WTC11 (cell line): ENCODE measurements at regions of chr12 and their contacts with region 1.

Region 1: DNA sequence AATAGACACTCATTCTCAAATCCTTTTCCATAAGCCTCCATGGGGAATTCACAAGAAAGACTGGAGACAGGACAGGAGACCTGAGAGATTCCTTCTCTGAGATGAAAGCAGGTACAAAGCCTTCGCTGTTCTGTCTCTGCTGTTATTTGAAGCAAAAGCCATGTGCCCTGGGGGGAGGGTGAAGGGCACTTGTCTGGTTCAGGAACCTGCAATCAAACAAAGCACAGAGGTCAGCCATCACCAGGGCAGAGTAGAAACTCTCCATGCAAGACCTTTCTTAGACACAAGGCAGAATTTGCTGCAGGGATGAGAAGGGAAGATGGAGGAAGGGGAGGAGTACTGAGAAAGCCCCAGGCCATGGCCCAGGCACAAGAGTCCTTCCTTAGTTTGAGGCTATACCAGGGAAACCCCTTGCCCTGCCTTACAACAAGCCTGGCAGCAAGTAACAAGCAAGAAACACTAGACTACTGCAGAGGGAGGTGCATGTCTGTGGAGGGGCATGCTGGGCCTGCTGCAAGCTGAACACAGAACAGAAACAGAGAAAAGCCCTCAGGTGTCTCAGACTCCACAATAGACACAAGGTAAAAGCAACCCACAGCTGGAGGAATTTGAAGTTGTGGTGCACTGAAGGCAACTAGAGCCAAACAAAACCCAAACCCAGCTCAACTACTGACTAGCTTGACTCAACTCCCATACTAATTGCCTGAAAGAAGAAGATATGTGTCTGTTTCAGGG is 7.8 kb upstream of the ART4 start:
- DNase-seq: no peak
- ATAC-seq: no peak
- H3K4me3 Mint-ChIP-seq: no peak overlapping the region
- H3K27ac Mint-ChIP-seq: no peak overlapping the region
- H3K4me1 Mint-ChIP-seq: peaks cover 22% of the 10 kb centered on the region
- H3K27me3 Mint-ChIP-seq: peaks cover 4% of the 10 kb centered on the region
- CTCF ChIP-seq: no peak

Region 2: GRCh38 chr12:14803011-14803829 is 47.9 kb before region 1 on chr12 and contains the starts of genes C12orf60 and WBP11:
- CTCF ChIA-PET with region 1: no interaction called
- POLR2A ChIA-PET with region 1: no interaction called
- DNase-seq: peak; percentile 87
- ATAC-seq: peak; percentile 99
- H3K4me3 Mint-ChIP-seq: no peak within 1 kb of the TSS
- H3K27ac Mint-ChIP-seq: no peak within 1 kb of the TSS; the same call in 1 of the 2 replicates
- H3K4me1 Mint-ChIP-seq: peaks cover 17% of the 10 kb centered on the region
- H3K27me3 Mint-ChIP-seq: no peaks in the 10 kb centered on the region
- CTCF ChIP-seq: no peak
- total RNA-seq, gene C12orf60: 1.3 to 2.0 TPM (median 1.8 TPM) in 3 replicates
- total RNA-seq, gene WBP11: 98.4 to 111 TPM (median 102 TPM) in 3 replicates

Region 3: GRCh38 chr12:14824012-14824634 is 27.0 kb before region 1 on chr12:
- CTCF ChIA-PET with region 1: no interaction called
- POLR2A ChIA-PET with region 1: no interaction called
- DNase-seq: no peak
- ATAC-seq: no peak
- H3K4me3 Mint-ChIP-seq: no peak overlapping the region
- H3K27ac Mint-ChIP-seq: no peak overlapping the region
- H3K4me1 Mint-ChIP-seq: peaks cover 9% of the 10 kb centered on the region
- H3K27me3 Mint-ChIP-seq: no peaks in the 10 kb centered on the region
- CTCF ChIP-seq: no peak

Region 4: DNA sequence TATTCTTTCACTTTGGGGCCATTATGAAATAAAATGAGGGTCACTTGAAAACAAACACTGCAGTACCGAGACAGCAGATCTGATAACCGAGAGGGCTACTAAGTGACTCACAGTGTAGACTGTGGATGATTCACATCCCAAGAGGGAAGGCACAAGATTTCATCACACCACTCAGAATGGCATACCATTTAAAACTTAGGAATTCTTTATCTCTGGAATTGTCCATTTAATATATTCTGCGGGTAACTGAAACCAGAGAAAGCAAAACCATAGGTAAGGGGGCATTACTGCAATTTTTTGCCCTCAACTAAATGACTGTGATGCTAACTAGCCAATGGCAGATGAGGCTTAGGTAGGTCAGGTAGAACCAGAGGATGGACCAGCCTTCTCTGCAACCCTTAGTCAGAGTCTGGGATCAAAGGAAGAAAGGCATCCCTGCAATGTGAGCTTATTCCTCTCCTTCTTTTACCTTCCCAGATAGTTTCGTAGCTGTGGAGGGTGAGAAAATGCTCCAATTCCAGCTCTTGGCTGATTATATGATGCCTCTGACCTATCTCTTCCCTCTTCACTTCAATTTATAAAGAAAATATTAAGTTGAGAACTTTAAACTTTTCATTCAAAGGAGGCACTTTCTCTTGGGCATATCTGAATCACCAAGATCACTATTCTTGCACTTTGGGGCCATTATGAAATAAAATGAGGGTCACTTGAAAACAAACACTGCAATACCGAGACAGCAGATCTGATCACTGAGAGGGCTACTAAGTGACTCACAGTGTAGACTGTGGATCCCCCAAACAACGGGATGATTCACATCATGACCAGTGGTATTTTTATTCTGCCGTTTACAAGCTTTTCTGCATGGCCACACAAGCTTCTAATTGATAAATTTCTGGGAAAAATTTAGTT is 14.5 kb before region 1 on chr12:
- CTCF ChIA-PET with region 1: no interaction called
- POLR2A ChIA-PET with region 1: no interaction called
- DNase-seq: no peak
- ATAC-seq: peak; percentile 30; the same call in 1 of the 2 replicates
- H3K4me3 Mint-ChIP-seq: no peak overlapping the region
- H3K27ac Mint-ChIP-seq: no peak overlapping the region
- H3K4me1 Mint-ChIP-seq: peaks cover 5% of the 10 kb centered on the region
- H3K27me3 Mint-ChIP-seq: no peaks in the 10 kb centered on the region
- CTCF ChIP-seq: no peak

Region 5: DNA sequence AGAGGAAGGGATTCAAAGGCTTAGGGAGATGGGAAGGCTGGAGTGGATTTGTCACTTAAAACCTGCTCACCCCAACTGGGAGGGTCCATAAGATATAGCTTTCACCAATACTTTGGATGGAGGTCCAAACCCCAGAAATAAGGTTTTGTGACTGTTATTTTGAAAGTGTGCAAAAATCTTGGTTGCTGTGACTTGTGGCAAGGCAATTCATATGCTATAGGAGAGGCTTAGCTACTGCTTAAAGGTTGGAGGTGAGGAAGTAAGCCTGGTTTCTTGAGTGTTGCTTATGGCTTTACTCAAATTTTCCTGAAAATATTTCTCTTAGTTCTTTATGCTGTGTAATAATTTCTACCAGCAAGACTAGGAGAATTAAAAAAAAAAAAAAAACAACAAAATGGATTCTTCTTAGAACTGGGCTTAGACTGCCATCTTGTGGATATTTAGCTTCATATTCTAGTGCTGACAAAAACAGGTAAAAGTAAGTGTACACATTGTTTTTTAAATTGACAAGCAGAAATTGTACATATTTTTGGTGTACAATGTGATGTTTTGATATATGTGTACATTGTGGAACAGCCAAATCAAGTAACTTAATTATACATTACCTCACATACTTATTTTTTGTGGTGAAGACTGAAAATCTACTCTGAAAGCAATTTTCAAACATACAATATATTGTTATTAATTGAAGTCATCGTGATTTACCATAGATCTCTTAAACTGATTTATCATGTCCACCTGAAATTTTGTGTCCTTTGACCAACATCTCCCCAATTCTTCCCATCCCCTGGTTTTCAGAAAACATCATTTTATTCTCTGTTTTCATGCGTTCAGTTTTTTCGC is 144.7 kb after region 1 on chr12:
- CTCF ChIA-PET with region 1: interaction called, 13 read pairs
- POLR2A ChIA-PET with region 1: no interaction called
- DNase-seq: no peak
- ATAC-seq: no peak
- H3K4me3 Mint-ChIP-seq: no peak overlapping the region
- H3K27ac Mint-ChIP-seq: no peak overlapping the region
- H3K4me1 Mint-ChIP-seq: no peaks in the 10 kb centered on the region
- H3K27me3 Mint-ChIP-seq: no peaks in the 10 kb centered on the region
- CTCF ChIP-seq: no peak; the same call in none of the 2 replicates

Region 6: GRCh38 chr12:15050659-15051058 is 199.6 kb after region 1 on chr12:
- CTCF ChIA-PET with region 1: no interaction called
- POLR2A ChIA-PET with region 1: no interaction called
- DNase-seq: no peak
- ATAC-seq: no peak
- H3K4me3 Mint-ChIP-seq: no peak overlapping the region
- H3K27ac Mint-ChIP-seq: no peak overlapping the region
- H3K4me1 Mint-ChIP-seq: no peaks in the 10 kb centered on the region
- H3K27me3 Mint-ChIP-seq: no peaks in the 10 kb centered on the region; the same call in 1 of the 2 replicates
- CTCF ChIP-seq: no peak